CD8-positive, alpha-beta T cell (primary cell): ENCODE measurements at regions of chr17 and their contacts with region 1.

Region 1: GRCh38 chr17:76868176-76868668 is at the start of gene MGAT5B:
- DNase-seq: peak; percentile 49 to 89 (median 74)
- ATAC-seq: peak; percentile 92
- H3K4me3 ChIP-seq: peak within 1 kb of the TSS in 1 of 2 experiments; percentile 39
- H3K4me3 Mint-ChIP-seq: peak within 1 kb of the TSS; percentile 76
- H3K27ac ChIP-seq: no peak within 1 kb of the TSS
- H3K27ac Mint-ChIP-seq: no peak within 1 kb of the TSS
- H3K4me1 ChIP-seq: peaks cover 10% of the 10 kb centered on the region
- H3K4me1 Mint-ChIP-seq: peaks cover 5% of the 10 kb centered on the region
- H3K27me3 ChIP-seq: peaks cover 12 to 18% of the 10 kb centered on the region in 2 experiments
- H3K27me3 Mint-ChIP-seq: peaks cover 19% of the 10 kb centered on the region
- CTCF ChIP-seq: peak; percentile 69
- total RNA-seq, gene MGAT5B: 0.24 to 0.36 TPM

Region 2: DNA sequence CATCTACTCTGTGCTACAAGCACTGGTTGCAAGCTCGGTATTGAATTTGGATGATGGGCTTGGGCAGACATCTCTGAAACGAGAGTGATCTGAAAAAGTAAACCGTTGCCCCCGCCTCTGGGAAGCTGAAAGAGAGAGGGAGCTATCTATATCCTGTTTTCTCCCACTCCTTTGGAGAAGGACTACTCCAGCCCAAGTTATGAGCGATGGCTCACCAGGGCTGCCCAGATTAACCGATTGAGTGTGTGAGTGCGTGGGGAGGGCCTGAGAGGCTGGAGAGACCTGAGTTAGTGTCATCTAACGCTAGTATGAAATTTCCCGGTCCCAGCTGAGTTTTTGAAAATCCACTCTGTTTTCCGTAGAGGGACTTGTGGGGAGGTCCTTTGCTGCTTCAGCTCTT is 11.5 kb after region 1 on chr17:
- CTCF ChIA-PET with region 1: interaction called, 14 read pairs
- POLR2A ChIA-PET with region 1: interaction called, 3 read pairs
- intact Hi-C with region 1: no loop called
- DNase-seq: no peak
- ATAC-seq: no peak
- H3K4me3 ChIP-seq: no peak overlapping the region
- H3K4me3 Mint-ChIP-seq: no peak overlapping the region
- H3K27ac ChIP-seq: no peak overlapping the region
- H3K27ac Mint-ChIP-seq: no peak overlapping the region
- H3K4me1 ChIP-seq: no peaks in the 10 kb centered on the region
- H3K4me1 Mint-ChIP-seq: no peaks in the 10 kb centered on the region
- H3K27me3 ChIP-seq: no peaks in the 10 kb centered on the region
- H3K27me3 Mint-ChIP-seq: no peaks in the 10 kb centered on the region
- CTCF ChIP-seq: no peak

Region 3: DNA sequence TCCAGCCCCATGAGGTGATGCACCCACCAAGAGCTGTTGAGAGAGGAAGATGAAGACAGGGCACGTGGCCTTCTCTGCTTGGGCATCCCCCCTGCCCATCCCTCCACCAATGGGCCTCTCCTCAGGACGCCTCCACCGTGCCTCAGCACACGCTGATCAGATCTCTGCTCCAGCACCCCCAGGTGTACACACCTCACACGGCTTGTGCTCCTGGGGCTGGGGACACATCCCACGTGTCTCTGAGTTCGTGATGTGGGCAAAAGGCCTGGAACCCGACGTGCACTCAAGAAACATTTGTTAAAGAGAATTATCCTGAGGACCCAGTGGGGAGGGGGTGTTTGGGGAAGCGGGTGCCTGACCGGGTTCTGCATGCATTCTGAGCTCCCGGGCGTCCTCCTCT is 55.3 kb after region 1 on chr17:
- CTCF ChIA-PET with region 1: no interaction called
- POLR2A ChIA-PET with region 1: no interaction called
- intact Hi-C with region 1: no loop called
- DNase-seq: no peak
- ATAC-seq: no peak
- H3K4me3 ChIP-seq: no peak overlapping the region
- H3K4me3 Mint-ChIP-seq: no peak overlapping the region
- H3K27ac ChIP-seq: no peak overlapping the region
- H3K27ac Mint-ChIP-seq: no peak overlapping the region
- H3K4me1 ChIP-seq: no peaks in the 10 kb centered on the region
- H3K4me1 Mint-ChIP-seq: no peaks in the 10 kb centered on the region
- H3K27me3 ChIP-seq: no peaks in the 10 kb centered on the region
- H3K27me3 Mint-ChIP-seq: no peaks in the 10 kb centered on the region
- CTCF ChIP-seq: no peak

Region 4: DNA sequence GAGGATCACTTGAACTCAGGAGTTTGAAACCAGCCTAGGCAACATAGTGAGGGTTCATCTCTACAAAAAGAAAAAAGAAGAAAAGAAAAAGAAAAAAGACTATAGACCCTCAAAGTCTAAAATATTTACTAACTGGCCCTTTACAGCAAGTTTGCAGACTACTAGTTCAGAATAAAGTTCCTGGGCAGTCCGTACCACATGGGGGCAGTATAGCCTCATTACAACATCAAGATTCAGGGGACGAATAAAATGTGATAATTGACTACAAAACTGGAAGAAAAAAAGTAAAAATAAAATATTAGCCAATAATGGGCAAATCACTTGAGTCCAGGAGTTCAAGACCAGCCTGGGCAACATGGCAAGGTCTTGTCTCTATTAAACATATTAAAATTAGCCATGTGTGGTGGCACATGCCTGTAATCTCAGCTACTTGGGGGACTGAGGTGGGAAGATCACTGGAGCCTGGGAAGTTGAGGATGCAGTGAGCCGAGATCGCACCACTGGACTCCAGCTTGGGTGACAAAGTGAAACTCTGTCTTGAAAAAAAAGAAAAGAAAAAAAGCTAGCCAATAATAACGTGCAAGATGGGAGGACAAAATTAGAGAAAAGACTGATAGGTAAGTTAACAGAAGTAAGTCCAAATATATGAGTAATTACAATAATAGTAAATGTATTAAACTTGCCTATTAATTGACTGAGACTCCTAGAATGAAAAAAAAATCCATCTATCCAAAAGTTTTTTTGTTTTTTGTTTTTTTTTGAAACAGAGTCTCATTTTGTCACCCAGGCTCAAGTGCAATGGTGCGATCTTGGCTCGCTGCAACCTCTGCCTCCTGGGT is 143.2 kb after region 1 on chr17:
- CTCF ChIA-PET with region 1: interaction called, 5 read pairs
- POLR2A ChIA-PET with region 1: no interaction called
- intact Hi-C with region 1: loop called in 1 of 2 experiments (anchors 2 kb)
- DNase-seq: peak; percentile 20 to 69 (median 56)
- ATAC-seq: no peak
- H3K4me3 ChIP-seq: no peak overlapping the region
- H3K4me3 Mint-ChIP-seq: no peak overlapping the region
- H3K27ac ChIP-seq: no peak overlapping the region
- H3K27ac Mint-ChIP-seq: no peak overlapping the region
- H3K4me1 ChIP-seq: no peaks in the 10 kb centered on the region
- H3K4me1 Mint-ChIP-seq: peaks cover 2% of the 10 kb centered on the region
- H3K27me3 ChIP-seq: no peaks in the 10 kb centered on the region
- H3K27me3 Mint-ChIP-seq: no peaks in the 10 kb centered on the region
- CTCF ChIP-seq: peak; percentile 81

Region 5: DNA sequence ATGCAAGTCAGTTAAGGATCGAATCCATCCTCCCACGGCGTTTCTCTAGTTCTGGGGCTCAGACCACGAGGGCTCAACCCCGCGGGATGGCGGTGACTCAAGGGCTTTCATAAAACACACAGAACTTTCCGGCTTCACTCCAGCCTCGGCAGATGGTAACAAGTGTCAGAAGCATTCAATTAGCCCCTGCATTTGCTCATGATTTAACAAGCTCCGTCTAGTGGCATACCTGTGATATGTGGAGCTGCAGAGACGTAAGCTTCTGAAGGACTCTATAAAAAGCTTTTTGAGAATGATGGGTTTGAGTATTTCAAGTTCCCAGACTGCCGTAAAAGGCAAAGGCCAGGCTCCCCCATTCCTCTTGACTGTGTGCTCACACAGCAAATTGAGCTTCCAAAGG is 181.2 kb after region 1 on chr17:
- CTCF ChIA-PET with region 1: interaction called, 186 read pairs
- POLR2A ChIA-PET with region 1: interaction called, 3 read pairs
- intact Hi-C with region 1: no loop called
- DNase-seq: no peak
- ATAC-seq: no peak
- H3K4me3 ChIP-seq: no peak overlapping the region
- H3K4me3 Mint-ChIP-seq: no peak overlapping the region
- H3K27ac ChIP-seq: no peak overlapping the region
- H3K27ac Mint-ChIP-seq: no peak overlapping the region
- H3K4me1 ChIP-seq: no peaks in the 10 kb centered on the region
- H3K4me1 Mint-ChIP-seq: no peaks in the 10 kb centered on the region
- H3K27me3 ChIP-seq: no peaks in the 10 kb centered on the region
- H3K27me3 Mint-ChIP-seq: peaks cover 7% of the 10 kb centered on the region
- CTCF ChIP-seq: no peak

Region 6: DNA sequence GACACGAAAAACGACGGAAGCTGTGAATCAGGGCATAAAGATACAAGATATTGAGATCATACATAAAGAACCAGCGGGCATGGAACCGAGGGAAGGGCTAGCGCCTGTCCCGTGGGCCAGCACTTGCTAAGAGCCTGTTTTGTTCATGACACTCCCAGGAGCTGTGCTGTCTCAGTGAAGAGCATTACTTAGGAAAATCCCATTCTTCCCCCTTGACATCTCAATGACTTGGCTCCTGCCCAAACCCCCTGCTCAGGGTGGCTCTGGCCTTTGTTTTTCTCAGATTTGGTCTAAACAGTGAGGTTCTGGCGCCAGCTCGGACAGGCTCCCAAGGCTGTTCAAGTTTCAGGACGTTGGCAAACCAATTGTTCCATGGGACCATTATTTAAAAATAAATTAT is 193.4 kb after region 1 on chr17:
- CTCF ChIA-PET with region 1: interaction called, 186 read pairs
- POLR2A ChIA-PET with region 1: interaction called, 9 read pairs
- intact Hi-C with region 1: loop called (anchors 1 kb)
- DNase-seq: no peak
- ATAC-seq: no peak
- H3K4me3 ChIP-seq: no peak overlapping the region
- H3K4me3 Mint-ChIP-seq: no peak overlapping the region
- H3K27ac ChIP-seq: no peak overlapping the region
- H3K27ac Mint-ChIP-seq: no peak overlapping the region
- H3K4me1 ChIP-seq: no peaks in the 10 kb centered on the region
- H3K4me1 Mint-ChIP-seq: peaks cover under 1% of the 10 kb centered on the region
- H3K27me3 ChIP-seq: peaks cover 0 to 5% of the 10 kb centered on the region in 2 experiments
- H3K27me3 Mint-ChIP-seq: peaks cover 12% of the 10 kb centered on the region
- CTCF ChIP-seq: no peak

Region 7: DNA sequence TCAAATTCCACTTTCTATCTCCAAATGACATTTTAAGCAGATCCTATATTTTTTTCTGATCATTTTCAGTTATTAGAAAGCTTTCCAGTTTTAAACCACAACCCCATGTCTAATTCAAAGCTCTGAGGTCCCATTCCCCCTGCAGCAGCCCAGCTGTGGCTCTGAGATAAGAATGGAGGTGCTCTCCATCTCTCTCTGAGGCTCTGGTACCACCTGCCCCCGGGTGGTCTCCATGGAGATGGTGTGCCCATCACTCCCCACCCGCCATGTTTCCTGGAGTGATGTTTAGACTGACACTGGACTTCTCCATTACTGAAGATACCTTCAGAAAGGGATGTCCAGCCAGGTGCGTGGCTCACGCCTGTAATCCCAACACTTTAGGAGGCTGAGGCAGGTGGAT is 204.4 kb after region 1 on chr17:
- CTCF ChIA-PET with region 1: interaction called, 130 read pairs
- POLR2A ChIA-PET with region 1: interaction called, 3 read pairs
- intact Hi-C with region 1: no loop called
- DNase-seq: no peak
- ATAC-seq: no peak
- H3K4me3 ChIP-seq: no peak overlapping the region
- H3K4me3 Mint-ChIP-seq: no peak overlapping the region
- H3K27ac ChIP-seq: no peak overlapping the region
- H3K27ac Mint-ChIP-seq: no peak overlapping the region
- H3K4me1 ChIP-seq: no peaks in the 10 kb centered on the region
- H3K4me1 Mint-ChIP-seq: no peaks in the 10 kb centered on the region
- H3K27me3 ChIP-seq: peaks cover 0 to 5% of the 10 kb centered on the region in 2 experiments
- H3K27me3 Mint-ChIP-seq: peaks cover 42% of the 10 kb centered on the region
- CTCF ChIP-seq: no peak

Region 8: GRCh38 chr17:77247048-77247541 is 378.9 kb after region 1 on chr17:
- CTCF ChIA-PET with region 1: no interaction called
- POLR2A ChIA-PET with region 1: no interaction called
- intact Hi-C with region 1: loop called (anchors 1 kb)
- DNase-seq: peak; percentile 77 to 93 (median 85)
- ATAC-seq: peak; percentile 99
- H3K4me3 ChIP-seq: peak overlapping the region; percentile 37 to 55
- H3K4me3 Mint-ChIP-seq: peak overlapping the region; percentile 69
- H3K27ac ChIP-seq: no peak overlapping the region
- H3K27ac Mint-ChIP-seq: peak overlapping the region; percentile 27
- H3K4me1 ChIP-seq: peaks cover 11% of the 10 kb centered on the region
- H3K4me1 Mint-ChIP-seq: peaks cover 9% of the 10 kb centered on the region
- H3K27me3 ChIP-seq: no peaks in the 10 kb centered on the region
- H3K27me3 Mint-ChIP-seq: peaks cover 26% of the 10 kb centered on the region
- CTCF ChIP-seq: peak; percentile 97